Psoas muscle (tissue), 8 donors: ENCODE measurements at regions of chr1 and their contacts with region 1.

Region 1: DNA sequence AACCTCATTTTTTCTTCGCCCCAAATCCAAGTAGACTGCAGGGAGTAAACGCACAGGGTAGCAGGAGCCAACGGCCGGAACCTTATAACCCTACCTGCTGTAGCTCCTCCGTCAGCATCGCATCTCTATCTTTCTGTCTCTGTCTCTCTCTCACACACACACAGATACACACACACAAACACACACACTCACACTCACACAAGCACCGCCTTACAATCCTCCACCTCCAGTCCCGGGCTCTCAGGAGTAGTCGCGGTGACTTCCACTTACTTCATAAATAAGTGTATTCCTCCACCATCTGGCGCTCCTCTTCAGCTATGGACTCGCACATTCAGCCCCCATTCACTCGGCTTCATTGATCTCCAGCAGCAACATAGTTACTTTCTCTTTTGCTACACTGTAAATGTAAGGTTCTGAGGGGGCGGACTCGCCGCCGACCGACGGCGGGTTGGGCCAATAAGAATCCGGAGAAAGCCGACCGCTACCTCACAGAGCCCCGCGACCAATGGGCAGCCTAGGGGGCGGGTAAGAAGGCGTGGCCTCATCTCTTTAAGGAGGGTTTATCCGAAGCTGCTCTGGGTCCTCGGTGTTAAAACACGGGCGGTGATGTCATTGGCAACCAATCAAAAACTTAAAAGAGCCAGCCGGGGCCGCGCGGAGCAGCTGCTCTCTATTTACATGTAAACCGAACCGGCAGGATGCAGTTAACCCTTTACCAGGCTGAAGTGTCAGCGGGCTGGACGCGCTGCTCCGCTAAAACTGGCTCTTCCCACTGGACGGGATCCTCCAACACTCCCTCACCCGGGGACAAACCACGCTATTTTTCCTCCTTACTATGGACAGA is at the start of gene DUSP10:
- DNase-seq: peak; percentile 98
- ATAC-seq: peak; percentile 90 to 93 (median 90)
- H3K4me3 ChIP-seq: peak within 1 kb of the TSS; percentile 80
- H3K27ac ChIP-seq: peak within 1 kb of the TSS; percentile 99
- H3K4me1 ChIP-seq: peaks cover 33% of the 10 kb centered on the region
- H3K27me3 ChIP-seq: no peaks in the 10 kb centered on the region
- CTCF ChIP-seq: no peak
- total RNA-seq, gene DUSP10: 5.2 to 15.5 (median 9.3) TPM

Region 2: DNA sequence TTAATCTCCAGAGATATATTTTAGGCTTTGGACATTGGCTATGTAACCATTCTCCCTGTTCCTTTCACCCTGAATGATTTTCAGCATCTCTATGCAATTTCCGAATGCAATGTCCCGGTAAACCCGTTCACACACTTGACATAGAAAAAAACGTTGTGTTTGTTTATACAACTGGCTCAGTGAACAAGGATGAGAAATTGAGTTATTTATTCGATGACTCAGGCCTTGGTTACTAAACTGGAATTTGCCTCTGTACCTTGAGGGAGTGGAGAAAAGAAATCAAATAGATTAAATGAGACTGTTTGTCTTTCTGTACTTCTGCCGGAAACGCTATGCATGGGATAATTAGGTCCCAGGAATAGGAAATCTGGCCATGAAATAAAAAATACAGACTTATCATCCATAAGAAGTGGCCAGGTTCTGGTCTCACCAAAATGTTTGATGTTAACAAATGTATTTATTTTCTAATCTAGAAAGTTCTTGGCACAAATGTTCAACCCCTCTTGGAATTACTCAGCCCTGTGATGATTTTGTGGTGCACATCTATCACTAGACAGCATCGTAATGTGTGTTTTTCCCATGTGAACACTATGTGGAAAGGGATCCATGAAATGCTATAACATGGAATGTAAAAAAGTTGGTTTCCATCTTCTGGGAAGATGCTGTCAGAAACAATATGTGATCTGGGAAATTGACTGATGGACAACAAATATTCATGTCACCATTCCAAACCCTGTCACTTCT is 254.0 kb before region 1 on chr1:
- intact Hi-C with region 1: no loop called
- DNase-seq: no peak
- ATAC-seq: no peak
- H3K4me3 ChIP-seq: no peak overlapping the region
- H3K27ac ChIP-seq: no peak overlapping the region
- H3K4me1 ChIP-seq: no peaks in the 10 kb centered on the region
- H3K27me3 ChIP-seq: no peaks in the 10 kb centered on the region
- CTCF ChIP-seq: no peak

Region 3: DNA sequence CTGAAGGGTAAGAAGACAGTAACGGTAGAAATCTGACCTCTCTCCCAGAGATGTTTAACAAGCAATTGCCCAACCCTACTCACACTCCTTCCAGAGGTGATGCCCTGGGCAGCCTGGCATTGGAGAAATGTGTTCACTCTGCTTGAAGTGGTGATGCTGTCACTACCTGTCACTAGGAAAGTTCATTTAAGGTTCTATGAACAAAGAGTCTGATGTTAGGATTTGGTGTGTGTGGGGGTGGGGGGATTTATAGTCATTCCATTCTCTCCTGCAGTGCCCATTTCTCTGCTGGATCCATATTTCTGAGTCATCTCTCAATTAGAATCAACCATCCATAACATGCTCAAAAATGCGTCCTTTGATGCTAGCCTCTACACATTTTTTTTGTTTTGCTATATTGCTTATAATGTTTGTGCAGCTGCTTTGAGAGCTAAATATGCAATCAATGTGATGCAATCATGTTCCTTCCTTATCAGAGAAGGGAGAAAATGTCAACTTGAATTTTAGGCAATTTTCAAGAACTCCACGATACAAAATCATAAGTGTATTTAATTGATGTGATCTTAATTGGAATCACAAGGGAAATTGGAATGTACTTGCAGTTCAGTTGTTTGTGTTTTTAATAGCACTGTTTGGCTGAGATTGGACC is 173.9 kb before region 1 on chr1:
- intact Hi-C with region 1: loop called in 1 of 2 experiments (anchors 5 kb)
- DNase-seq: no peak
- ATAC-seq: no peak
- H3K4me3 ChIP-seq: no peak overlapping the region
- H3K27ac ChIP-seq: no peak overlapping the region
- H3K4me1 ChIP-seq: peaks cover 13% of the 10 kb centered on the region
- H3K27me3 ChIP-seq: no peaks in the 10 kb centered on the region
- CTCF ChIP-seq: no peak

Region 4: GRCh38 chr1:221886743-221887413 is 144.9 kb after region 1 on chr1:
- intact Hi-C with region 1: loop called in 1 of 2 experiments (anchors 5 kb)
- DNase-seq: peak; percentile 85 to 92
- ATAC-seq: peak; percentile 97 to 99 (median 99)
- H3K4me3 ChIP-seq: no peak overlapping the region
- H3K27ac ChIP-seq: peak overlapping the region; percentile 56
- H3K4me1 ChIP-seq: peaks cover 32% of the 10 kb centered on the region
- H3K27me3 ChIP-seq: no peaks in the 10 kb centered on the region
- CTCF ChIP-seq: no peak

Region 5: GRCh38 chr1:222048094-222048595 is 306.2 kb after region 1 on chr1:
- intact Hi-C with region 1: loop called (anchors 5 to 10 kb)
- DNase-seq: no peak
- ATAC-seq: no peak
- H3K4me3 ChIP-seq: no peak overlapping the region
- H3K27ac ChIP-seq: no peak overlapping the region
- H3K4me1 ChIP-seq: peaks cover 14% of the 10 kb centered on the region
- H3K27me3 ChIP-seq: no peaks in the 10 kb centered on the region
- CTCF ChIP-seq: no peak